ENCODE measurements at regions of chr15 and their contacts with region 1.

Region 1: DNA sequence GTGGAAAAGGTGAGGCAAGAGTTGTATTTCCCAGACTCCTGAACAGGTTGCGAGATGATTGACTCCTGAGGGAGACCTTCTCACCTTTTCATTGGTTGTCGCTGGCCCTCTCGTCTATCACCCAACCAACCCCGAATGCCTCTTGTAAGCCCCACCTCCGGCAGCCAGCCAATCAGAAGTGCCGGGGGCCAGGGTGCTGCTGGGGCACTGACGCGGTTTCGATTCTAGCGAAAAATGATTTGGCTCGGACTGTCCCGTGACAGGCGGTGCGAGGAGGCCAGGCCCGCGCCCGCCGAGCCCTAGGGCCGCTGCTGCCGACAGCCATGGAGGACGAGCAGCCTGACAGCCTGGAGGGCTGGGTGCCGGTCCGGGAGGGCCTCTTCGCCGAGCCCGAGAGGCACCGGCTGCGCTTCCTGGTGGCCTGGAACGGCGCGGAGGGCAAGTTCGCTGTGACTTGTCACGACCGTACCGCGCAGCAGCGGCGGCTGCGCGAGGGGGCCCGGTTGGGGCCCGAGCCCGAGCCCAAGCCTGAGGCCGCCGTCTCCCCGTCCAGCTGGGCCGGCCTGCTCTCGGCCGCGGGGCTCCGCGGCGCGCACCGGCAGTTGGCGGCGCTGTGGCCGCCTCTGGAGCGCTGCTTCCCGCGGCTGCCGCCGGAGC is at the start of gene WHAMM:
- DNase-seq: peak; percentile 98
- ATAC-seq: peak; percentile 96
- H3K4me3 Mint-ChIP-seq: peak within 1 kb of the TSS; percentile 84
- H3K27ac Mint-ChIP-seq: peak within 1 kb of the TSS; percentile 92
- H3K4me1 Mint-ChIP-seq: peaks cover 30% of the 10 kb centered on the region
- H3K27me3 Mint-ChIP-seq: no peaks in the 10 kb centered on the region
- CTCF ChIP-seq: no peak
- total RNA-seq, gene WHAMM: 5.8 to 6.1 TPM

Region 2: DNA sequence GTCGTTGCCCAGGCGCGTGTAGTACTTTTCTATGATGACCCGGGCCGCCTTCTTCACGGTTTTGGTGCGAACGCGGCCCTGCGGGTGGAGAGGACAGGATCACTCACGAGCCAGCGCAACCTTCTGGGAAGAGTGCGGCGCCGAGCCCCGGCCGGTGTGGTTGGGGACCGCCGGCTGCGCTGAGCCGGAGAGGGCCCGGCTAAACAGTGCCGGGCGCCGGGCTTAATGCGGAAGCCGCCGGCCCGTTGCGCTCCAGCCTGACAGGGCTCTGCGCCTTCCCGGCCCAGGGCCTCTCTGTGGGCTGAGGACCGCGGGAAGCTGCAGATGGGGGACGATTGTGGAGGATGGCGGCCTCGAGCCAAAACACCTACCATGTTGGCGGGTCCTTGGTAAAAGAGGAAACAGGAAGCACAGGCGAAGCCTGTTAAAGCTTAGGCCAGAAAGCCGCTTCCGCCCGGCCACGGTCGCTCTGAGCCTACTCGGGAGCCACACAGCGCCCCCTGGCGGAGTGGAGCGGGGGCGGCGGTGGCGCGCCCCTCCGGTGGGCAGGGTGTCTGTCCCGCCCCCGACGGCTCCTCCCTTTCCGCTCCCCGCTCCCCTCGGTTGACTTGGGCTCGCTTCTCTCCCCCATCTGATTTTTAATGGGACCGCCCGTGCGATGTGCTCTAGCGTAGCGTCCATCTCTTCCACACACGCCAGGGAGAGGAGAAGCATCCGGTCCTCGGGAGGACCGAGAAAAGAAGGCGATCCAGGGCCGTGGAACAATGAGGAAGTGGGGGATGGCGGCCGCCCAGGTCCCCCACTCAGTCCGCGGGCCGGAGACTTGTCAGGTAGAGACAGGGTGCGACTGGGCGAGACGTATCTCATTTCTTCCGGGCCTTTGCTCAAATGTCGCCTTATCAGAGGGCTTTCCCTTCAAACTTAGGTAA is 269.2 kb before region 1 on chr15 and contains the start of gene RPS17:
- CTCF ChIA-PET with region 1: interaction called, 10 read pairs
- POLR2A ChIA-PET with region 1: interaction called, 39 read pairs
- intact Hi-C with region 1: no loop called
- DNase-seq: peak; percentile 98
- ATAC-seq: peak; percentile 95
- H3K4me3 Mint-ChIP-seq: peak within 1 kb of the TSS; percentile 94
- H3K27ac Mint-ChIP-seq: peak within 1 kb of the TSS; percentile 98
- H3K4me1 Mint-ChIP-seq: peaks cover 38% of the 10 kb centered on the region
- H3K27me3 Mint-ChIP-seq: no peaks in the 10 kb centered on the region
- CTCF ChIP-seq: peak; percentile 97
- total RNA-seq, gene RPS17: 3,057 to 3,069 TPM

Region 3: DNA sequence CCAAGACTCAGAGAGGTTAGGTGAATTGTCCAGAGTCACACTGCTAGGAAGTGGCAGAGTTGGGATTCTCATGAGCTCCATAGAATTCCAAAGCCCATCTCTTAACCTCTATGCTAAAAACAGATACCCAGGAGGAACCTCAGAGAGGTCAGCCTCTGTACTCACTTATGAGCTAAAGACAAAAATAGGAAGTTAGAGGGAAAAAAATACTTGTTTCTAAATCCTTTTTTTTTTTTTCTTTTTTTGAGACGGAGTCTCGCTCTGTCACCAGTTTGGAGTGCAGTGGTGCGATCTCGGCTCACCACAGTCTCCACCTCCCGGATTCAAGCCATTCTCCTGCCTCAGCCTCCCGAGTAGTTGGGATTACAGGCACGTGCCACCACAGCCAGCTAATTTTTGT is 35.0 kb before region 1 on chr15:
- CTCF ChIA-PET with region 1: no interaction called
- POLR2A ChIA-PET with region 1: no interaction called
- intact Hi-C with region 1: no loop called
- DNase-seq: no peak
- ATAC-seq: no peak
- H3K4me3 Mint-ChIP-seq: no peak overlapping the region
- H3K27ac Mint-ChIP-seq: no peak overlapping the region
- H3K4me1 Mint-ChIP-seq: no peaks in the 10 kb centered on the region
- H3K27me3 Mint-ChIP-seq: no peaks in the 10 kb centered on the region
- CTCF ChIP-seq: no peak

Region 4: GRCh38 chr15:82789491-82789890 is 20.0 kb before region 1 on chr15:
- CTCF ChIA-PET with region 1: no interaction called
- POLR2A ChIA-PET with region 1: no interaction called
- intact Hi-C with region 1: no loop called
- DNase-seq: no peak
- ATAC-seq: no peak
- H3K4me3 Mint-ChIP-seq: no peak overlapping the region
- H3K27ac Mint-ChIP-seq: no peak overlapping the region
- H3K4me1 Mint-ChIP-seq: no peaks in the 10 kb centered on the region
- H3K27me3 Mint-ChIP-seq: peaks cover 2% of the 10 kb centered on the region
- CTCF ChIP-seq: no peak

Region 5: DNA sequence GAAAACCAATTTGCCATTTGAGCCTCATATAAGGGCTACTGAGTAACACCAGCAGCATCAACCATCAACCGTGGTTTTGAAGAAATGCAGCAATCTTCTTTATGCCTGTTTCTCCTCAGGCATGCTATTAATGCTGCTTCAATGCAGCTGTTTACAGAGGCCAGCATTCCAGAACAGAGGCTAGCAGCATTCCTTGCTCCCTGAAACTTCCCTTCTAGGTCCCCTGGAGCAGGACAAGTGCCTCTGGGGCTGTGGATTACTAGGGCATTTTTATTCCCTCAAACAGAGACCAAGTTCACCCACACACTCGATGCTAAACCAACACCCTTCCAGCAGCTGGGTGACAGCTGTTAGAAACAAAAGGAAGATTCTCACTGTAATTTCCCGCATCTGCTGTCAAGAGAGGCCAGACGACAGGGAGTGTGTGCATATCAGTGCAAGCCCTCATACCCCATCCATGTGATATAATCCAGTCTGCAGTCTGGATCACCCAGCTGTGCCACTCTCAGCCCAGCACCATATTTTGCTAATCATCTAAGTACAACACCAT is 85.5 kb after region 1 on chr15:
- CTCF ChIA-PET with region 1: no interaction called
- POLR2A ChIA-PET with region 1: no interaction called
- intact Hi-C with region 1: no loop called
- DNase-seq: no peak
- ATAC-seq: no peak
- H3K4me3 Mint-ChIP-seq: no peak overlapping the region
- H3K27ac Mint-ChIP-seq: no peak overlapping the region
- H3K4me1 Mint-ChIP-seq: no peaks in the 10 kb centered on the region
- H3K27me3 Mint-ChIP-seq: no peaks in the 10 kb centered on the region
- CTCF ChIP-seq: no peak

Measured in activated CD8-positive, alpha-beta T cell treated with anti-CD3 and anti-CD28 coated beads for 36 hours (primary cell).